Gastrocnemius medialis (tissue), 4 donors: ENCODE measurements at regions of chr15 and their contacts with region 1.

Region 1: DNA sequence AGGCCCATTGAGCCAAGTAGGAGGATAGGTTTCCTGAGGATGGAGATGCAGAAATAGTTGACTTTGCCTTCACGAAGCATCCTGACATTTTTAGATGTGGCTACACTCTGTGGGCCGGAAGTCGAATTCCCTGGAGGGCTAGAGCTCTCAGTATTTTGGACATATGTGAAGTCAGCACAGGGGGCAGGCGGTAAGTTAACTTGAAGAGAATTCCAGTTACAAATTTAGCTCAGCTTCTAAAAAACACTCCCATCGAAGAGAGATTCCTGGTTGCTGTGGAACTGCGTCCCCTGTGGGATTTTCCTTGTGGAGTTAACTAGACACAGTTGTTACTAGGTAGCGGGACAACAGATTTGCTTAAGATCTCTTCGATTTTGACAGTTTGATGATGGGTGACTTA is 161.9 kb upstream of the RGMA start:
- DNase-seq: no peak
- ATAC-seq: peak; percentile 28 to 34
- H3K4me3 ChIP-seq: no peak overlapping the region
- H3K27ac ChIP-seq: peak overlapping the region in 3 of 4 donors; percentile 24 to 42 (median 40)
- H3K4me1 ChIP-seq: peaks cover 5 to 6% of the 10 kb centered on the region in 2 donors
- H3K27me3 ChIP-seq: no peaks in the 10 kb centered on the region
- CTCF ChIP-seq: no peak
- POLR2A ChIP-seq: no peak

Region 2: DNA sequence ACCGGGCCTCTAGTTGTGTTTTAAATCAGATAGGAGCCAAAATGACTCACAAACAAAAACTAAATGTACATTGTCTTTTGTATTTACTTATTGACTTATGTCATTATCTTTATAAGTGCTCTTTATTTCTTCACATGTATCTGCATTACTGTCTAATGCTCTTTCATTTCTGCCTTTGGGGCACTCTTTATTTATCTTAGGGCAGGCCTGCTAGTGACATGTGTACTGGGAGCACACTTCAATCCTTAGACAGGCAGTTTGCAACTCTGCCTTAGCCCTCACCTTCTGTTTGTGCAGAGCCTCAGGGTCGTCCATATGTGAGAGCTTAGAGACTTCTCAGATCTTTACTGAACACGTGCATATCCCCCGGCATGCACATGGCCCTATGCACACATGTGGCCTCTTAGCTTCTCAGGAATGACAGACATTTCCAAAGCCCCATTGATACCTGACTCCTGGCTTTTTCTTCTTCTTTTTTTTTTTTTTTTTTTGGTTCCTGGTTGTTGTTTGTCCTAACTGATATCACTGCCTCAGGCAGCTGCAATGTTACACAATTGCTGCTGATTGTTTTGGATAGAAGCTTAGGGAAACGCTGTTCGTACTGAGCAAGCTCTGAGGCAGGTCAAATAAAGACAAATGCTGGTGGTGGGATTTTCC is 54.9 kb before region 1 on chr15:
- in situ Hi-C with region 1: no loop called
- intact Hi-C with region 1: loop called (anchors 10 kb)
- DNase-seq: no peak
- ATAC-seq: no peak
- H3K4me3 ChIP-seq: no peak overlapping the region
- H3K27ac ChIP-seq: no peak overlapping the region
- H3K4me1 ChIP-seq: peaks cover 0 to under 1% of the 10 kb centered on the region in 2 donors
- H3K27me3 ChIP-seq: no peaks in the 10 kb centered on the region
- CTCF ChIP-seq: no peak
- POLR2A ChIP-seq: no peak

Region 3: DNA sequence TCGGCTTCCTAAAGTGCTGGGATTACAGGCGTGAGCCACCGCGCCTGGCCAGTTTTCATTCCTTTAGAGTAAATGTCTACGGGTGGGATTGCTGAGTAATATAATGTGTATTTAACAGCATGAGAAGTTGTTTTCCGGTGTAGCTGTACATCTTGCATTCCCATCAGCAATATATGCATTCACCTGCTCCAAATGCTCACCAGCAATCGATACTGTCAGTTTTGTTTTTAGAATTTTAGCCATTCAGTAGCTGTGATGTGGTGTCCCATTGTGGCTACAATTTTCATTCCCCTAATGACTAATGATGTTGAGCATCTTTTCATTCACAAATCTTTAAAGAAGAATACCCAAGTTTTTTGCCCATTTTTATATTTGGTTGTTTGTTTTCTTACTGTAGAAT is 27.1 kb before region 1 on chr15:
- in situ Hi-C with region 1: no loop called
- intact Hi-C with region 1: no loop called
- DNase-seq: no peak
- ATAC-seq: no peak
- H3K4me3 ChIP-seq: no peak overlapping the region
- H3K27ac ChIP-seq: no peak overlapping the region
- H3K4me1 ChIP-seq: no peaks in the 10 kb centered on the region
- H3K27me3 ChIP-seq: no peaks in the 10 kb centered on the region
- CTCF ChIP-seq: no peak
- POLR2A ChIP-seq: no peak

Region 4: DNA sequence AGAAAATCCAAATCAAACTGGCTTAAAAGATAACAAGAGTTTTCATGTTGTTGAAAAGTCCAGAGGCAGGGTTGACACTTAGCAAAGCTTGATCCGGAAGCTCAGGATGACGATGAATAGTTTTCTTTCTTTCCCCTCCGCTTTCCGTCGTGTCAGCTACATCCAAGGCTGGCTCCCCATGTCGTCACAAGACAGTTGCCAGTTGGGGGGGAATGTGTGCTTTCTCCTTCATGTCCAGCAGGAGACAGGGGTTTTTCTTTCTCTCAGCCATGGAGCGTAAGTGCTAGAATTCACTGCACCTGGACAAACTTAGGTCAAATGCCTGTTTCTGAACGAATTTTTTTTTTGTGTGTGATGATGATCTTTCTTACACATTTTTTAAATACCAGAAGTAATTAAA is 111.9 kb after region 1 on chr15:
- in situ Hi-C with region 1: no loop called
- intact Hi-C with region 1: no loop called
- DNase-seq: no peak
- ATAC-seq: no peak
- H3K4me3 ChIP-seq: no peak overlapping the region
- H3K27ac ChIP-seq: no peak overlapping the region
- H3K4me1 ChIP-seq: no peaks in the 10 kb centered on the region
- H3K27me3 ChIP-seq: no peaks in the 10 kb centered on the region
- CTCF ChIP-seq: no peak
- POLR2A ChIP-seq: no peak